ENCODE measurements at regions of chr12 and their contacts with region 1.

Region 1: DNA sequence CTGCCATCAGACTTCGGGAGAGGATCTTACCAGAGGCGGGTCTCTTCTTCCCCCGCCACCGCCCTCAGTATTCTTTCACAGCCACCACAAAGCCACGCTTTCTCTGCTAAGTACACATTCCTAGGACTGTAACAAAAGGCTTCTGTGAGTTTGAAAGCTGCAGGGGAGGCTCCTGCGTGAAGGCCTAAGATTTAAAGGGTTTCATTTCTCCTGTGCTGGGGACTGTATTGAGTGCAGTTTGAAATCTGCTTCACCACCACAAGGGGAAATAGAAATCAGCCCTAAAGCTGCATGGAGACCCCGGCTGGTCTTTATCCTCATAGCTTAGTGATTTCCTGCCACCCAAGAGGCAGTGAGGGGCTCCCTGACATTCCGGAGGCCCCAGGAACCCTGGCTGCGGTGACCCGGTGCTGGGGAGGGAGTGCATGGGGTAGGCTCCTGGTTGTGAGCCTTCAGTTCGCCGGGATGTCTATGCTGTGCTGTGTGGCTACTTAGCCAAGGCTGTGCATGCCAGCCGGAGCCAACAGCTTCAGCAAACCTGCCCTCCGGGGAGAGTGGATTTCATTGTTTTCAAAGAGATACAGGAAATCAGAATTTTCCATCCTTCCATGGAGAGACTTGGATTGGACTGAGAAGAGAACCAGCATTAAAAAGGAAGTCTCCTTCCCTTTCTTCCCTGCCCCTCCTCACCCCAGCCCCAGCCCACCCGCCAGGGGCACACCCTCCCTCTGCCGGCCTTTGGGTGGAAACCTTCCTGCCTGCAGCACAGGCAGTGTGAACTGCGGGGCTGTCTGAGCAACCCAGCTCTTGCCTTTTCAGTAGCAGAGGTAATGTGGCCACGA is 163.3 kb downstream of the ETV6 start:
- DNase-seq: peak; percentile 43 to 54 (median 52)
- H3K4me3 ChIP-seq: peak overlapping the region; percentile 1 to 62 (median 27)
- H3K4me3 Mint-ChIP-seq: peak overlapping the region; percentile 65 to 81
- H3K27ac ChIP-seq: peak overlapping the region; percentile 86 to 99
- H3K27ac Mint-ChIP-seq: peak overlapping the region; percentile 83 to 95 (median 92)
- H3K4me1 ChIP-seq: peaks cover 63 to 71% of the 10 kb centered on the region in 2 donors
- H3K4me1 Mint-ChIP-seq: peaks cover 71% of the 10 kb centered on the region
- H3K27me3 ChIP-seq: no peaks in the 10 kb centered on the region
- H3K27me3 Mint-ChIP-seq: peaks cover 0 to 1% (median 0%) of the 10 kb centered on the region in 3 donors
- CTCF ChIP-seq: peak; percentile 48

Region 2: GRCh38 chr12:11661491-11662089 is 151.2 kb before region 1 on chr12:
- intact Hi-C with region 1: no loop called
- DNase-seq: no peak
- H3K4me3 ChIP-seq: no peak overlapping the region
- H3K4me3 Mint-ChIP-seq: peak overlapping the region in 1 of 2 donors; percentile 31
- H3K27ac ChIP-seq: peak overlapping the region in 1 of 2 donors; percentile 13
- H3K27ac Mint-ChIP-seq: peak overlapping the region in 6 of 7 donors; percentile 3 to 75 (median 27)
- H3K4me1 ChIP-seq: peaks cover 70 to 92% of the 10 kb centered on the region in 2 donors
- H3K4me1 Mint-ChIP-seq: peaks cover 94% of the 10 kb centered on the region
- H3K27me3 ChIP-seq: no peaks in the 10 kb centered on the region
- H3K27me3 Mint-ChIP-seq: no peaks in the 10 kb centered on the region
- CTCF ChIP-seq: no peak

Region 3: DNA sequence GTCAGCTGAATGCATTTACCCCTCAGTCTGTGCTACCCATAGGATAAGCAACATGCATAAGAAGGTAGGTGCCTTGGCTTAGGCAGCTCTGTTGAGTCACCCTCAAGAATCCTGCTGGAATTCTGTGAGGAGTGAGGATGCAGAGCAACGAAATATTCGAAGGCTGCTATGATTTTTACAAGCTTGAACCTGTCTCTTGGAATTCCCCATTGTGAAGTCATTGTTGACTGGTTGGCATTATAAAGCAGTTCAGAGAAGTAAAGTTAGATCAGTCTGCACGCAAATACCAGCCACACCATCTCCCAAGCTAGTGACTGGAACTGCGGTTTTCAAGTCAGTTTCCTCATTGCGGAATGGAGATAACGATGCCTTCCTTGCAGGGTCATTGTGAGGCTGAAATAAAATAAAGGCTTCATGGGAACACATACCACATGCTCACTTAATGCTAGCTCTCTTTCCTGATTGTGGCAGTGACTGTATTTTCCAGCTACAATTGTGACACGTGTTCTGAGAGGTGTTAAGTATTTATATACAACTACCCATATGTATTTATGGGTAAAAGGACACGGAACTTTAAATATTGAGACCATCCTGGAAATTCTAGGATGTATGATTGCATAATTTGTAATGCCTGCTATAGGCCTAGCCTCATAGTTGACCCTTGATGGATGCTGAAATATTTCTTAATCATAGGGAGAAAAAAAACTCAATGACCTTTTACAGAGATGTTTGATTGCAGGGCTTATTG is 66.6 kb before region 1 on chr12:
- intact Hi-C with region 1: loop called in 1 of 2 experiments (anchors 5 kb)
- DNase-seq: peak; percentile 95 to 99 (median 99)
- H3K4me3 ChIP-seq: no peak overlapping the region
- H3K4me3 Mint-ChIP-seq: peak overlapping the region; percentile 35 to 37
- H3K27ac ChIP-seq: peak overlapping the region; percentile 91 to 100
- H3K27ac Mint-ChIP-seq: peak overlapping the region; percentile 94 to 99 (median 97)
- H3K4me1 ChIP-seq: peaks cover 77 to 88% of the 10 kb centered on the region in 2 donors
- H3K4me1 Mint-ChIP-seq: peaks cover 90% of the 10 kb centered on the region
- H3K27me3 ChIP-seq: no peaks in the 10 kb centered on the region
- H3K27me3 Mint-ChIP-seq: no peaks in the 10 kb centered on the region
- CTCF ChIP-seq: no peak

Region 4: DNA sequence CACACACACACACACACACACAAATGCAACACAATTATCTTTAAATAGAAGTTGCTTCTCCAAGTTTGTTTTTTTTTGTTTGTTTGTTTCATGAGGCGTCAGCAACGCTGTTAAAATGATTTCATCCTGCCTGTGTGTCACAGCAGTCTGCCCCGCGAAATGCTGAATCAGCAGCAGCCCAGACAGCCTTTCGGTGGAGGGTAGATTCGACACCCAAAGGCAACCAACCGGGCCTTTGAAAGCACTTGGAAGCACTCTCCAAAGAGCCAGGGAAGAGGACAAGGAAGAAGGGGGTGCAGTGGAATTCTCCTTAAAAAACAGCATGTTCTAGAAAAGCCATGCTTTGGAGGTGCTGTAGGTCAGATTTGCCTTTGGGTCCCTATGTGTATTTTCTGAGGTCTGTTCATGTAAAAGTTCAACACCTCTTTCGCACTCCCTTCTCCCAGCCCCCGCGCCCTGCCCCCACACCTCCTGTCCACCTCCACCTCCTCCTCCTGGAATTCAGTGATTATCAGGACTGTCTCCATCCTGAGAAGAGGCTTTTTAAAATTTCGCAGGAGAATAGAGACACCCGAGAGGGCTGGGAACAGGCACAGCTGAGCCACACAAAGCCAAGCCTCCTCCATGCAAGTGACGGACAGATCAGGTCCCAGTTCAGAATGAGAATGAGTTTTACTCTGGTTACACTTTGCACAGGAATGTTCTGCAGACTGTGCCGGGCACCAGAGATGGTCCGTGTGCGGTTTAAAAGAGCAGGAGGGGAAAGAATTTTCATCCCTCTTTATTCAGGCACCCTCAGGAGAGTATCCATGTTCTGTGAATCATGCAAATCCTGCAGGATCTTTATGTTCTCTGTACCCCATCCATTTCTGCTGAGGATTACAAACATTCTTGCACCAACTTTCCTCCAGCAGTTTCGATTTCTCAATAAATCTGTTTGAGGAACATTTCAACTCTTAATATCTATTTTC is 14.6 kb after region 1 on chr12:
- intact Hi-C with region 1: no loop called
- DNase-seq: peak; percentile 75 to 80 (median 78)
- H3K4me3 ChIP-seq: peak overlapping the region in 1 of 3 experiments; percentile 43
- H3K4me3 Mint-ChIP-seq: peak overlapping the region in 1 of 2 donors; percentile 34
- H3K27ac ChIP-seq: peak overlapping the region; percentile 81 to 89
- H3K27ac Mint-ChIP-seq: no peak overlapping the region
- H3K4me1 ChIP-seq: peaks cover 61 to 68% of the 10 kb centered on the region in 2 donors
- H3K4me1 Mint-ChIP-seq: peaks cover 30% of the 10 kb centered on the region
- H3K27me3 ChIP-seq: no peaks in the 10 kb centered on the region
- H3K27me3 Mint-ChIP-seq: peaks cover 0 to 3% (median 0%) of the 10 kb centered on the region in 3 donors
- CTCF ChIP-seq: no peak

Measured in CD14-positive monocyte (primary cell).